ENCODE measurements at regions of chr1 and their contacts with region 1.

Region 1: GRCh38 chr1:109539676-109540075 is at the start of gene GPR61:
- DNase-seq: no peak
- ATAC-seq: no peak
- H3K4me3 ChIP-seq: no peak within 1 kb of the TSS
- H3K27ac ChIP-seq: no peak within 1 kb of the TSS
- H3K4me1 ChIP-seq: no peaks in the 10 kb centered on the region
- H3K27me3 ChIP-seq: no peaks in the 10 kb centered on the region
- CTCF ChIP-seq: no peak
- total RNA-seq, gene GPR61: 0.09 TPM in 1 of 6 donors, not detected in the others

Region 2: DNA sequence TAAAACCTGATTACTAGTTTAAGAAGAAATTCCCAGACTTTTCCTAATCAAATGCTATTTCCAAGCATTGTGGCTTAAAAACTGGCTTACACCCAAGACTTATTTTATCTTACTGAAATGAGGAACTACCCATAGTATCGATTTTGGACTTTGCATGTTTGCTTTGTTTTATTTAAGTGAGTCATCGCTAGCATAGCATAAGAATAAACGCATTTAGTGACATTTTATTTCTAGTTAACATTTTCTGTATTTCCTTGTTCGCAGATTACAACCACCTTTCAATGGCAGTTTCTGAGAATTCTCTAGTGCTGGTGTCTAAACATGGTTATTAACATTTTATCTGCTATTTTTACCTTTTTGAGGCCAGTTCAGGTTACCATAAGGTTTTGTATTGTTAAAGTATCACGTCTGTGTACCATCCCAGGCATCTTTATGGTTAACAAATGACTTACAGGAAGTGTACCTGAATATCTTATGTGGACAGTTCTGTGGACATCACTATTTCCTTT is 955.3 kb before region 1 on chr1:
- intact Hi-C with region 1: no loop called
- DNase-seq: no peak
- ATAC-seq: peak; percentile 87 to 95 (median 92)
- H3K4me3 ChIP-seq: no peak overlapping the region
- H3K27ac ChIP-seq: peak overlapping the region in 3 of 4 donors; percentile 35 to 87 (median 80)
- H3K4me1 ChIP-seq: peaks cover 10 to 22% (median 22%) of the 10 kb centered on the region in 3 donors
- H3K27me3 ChIP-seq: no peaks in the 10 kb centered on the region
- CTCF ChIP-seq: no peak

Region 3: DNA sequence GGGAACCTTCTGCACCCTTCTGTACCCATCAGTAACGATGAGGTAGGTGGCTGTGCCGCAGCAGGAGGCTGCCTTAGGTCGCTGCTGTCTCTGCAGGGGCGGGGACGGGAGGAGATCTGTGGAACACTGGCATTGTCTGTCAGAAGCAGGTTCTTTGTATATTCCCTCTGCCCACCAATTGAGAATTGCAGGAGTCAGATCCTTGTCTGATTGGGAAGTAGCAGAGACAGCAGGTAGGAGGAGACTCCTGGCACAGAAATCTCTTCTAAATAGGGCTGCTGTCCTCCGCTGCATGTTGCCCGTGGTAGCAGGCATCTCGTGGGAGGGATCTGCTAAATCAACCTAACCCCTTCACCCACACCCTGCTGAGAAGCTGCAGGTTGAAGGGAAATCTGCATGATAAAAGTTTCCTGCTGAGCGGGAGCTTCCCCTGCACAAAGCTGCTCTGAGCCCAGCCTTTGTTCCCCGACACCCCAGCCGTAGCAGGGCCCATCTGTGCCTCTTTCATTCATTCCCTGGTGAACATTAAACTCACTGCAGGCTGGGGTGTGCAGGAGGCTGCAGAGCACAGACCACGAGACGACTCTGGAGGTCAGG is 310.0 kb before region 1 on chr1:
- intact Hi-C with region 1: no loop called
- DNase-seq: no peak
- ATAC-seq: no peak
- H3K4me3 ChIP-seq: no peak overlapping the region
- H3K27ac ChIP-seq: no peak overlapping the region
- H3K4me1 ChIP-seq: no peaks in the 10 kb centered on the region
- H3K27me3 ChIP-seq: no peaks in the 10 kb centered on the region
- CTCF ChIP-seq: no peak

Region 4: DNA sequence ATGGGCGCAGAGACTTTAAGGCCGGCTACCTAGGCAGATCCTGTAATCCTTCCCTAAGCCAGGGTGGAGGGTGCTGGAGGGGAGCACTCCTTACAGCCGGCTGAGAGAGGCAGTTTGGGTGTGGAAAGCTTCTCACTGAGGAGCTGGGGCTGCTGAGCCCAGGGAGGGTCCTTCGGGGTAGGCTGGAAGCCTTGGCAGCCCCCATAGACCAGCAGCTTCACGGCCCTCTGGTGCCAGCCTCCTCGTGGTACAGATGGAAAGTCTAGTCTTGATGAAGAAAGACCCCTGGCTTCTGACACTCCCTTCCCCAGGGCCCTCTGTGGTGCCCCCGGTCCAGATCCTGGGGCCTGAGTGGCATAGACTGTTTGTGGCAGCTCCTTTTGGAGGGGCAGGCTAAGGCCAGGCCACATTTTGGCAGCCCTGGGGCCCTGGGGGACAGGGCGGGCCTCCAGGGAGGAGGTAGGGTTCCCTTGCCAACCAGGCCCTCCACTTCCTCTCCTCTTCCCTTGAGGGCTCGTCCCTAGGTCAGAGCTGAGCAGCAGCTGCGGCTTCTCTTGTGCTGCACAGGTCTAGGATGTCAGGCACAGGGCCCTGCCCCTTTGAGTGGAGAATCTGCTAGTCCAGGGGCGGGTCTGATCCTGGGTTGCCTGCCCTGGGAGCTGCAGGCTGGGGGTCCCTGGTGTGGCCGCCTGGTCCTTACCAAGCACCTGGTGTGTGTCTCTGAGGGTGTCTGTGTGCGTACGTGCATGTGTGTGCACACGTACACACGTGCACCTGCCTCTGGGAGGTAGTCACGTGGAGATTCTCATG is 84.7 kb after region 1 on chr1:
- intact Hi-C with region 1: loop called in 2 of 3 experiments (anchors 5 kb)
- DNase-seq: peak in 1 of 6 donors; percentile 9
- ATAC-seq: no peak
- H3K4me3 ChIP-seq: no peak overlapping the region
- H3K27ac ChIP-seq: no peak overlapping the region
- H3K4me1 ChIP-seq: peaks cover under 1 to 6% (median under 1%) of the 10 kb centered on the region in 3 donors
- H3K27me3 ChIP-seq: no peaks in the 10 kb centered on the region
- CTCF ChIP-seq: no peak

Region 5: DNA sequence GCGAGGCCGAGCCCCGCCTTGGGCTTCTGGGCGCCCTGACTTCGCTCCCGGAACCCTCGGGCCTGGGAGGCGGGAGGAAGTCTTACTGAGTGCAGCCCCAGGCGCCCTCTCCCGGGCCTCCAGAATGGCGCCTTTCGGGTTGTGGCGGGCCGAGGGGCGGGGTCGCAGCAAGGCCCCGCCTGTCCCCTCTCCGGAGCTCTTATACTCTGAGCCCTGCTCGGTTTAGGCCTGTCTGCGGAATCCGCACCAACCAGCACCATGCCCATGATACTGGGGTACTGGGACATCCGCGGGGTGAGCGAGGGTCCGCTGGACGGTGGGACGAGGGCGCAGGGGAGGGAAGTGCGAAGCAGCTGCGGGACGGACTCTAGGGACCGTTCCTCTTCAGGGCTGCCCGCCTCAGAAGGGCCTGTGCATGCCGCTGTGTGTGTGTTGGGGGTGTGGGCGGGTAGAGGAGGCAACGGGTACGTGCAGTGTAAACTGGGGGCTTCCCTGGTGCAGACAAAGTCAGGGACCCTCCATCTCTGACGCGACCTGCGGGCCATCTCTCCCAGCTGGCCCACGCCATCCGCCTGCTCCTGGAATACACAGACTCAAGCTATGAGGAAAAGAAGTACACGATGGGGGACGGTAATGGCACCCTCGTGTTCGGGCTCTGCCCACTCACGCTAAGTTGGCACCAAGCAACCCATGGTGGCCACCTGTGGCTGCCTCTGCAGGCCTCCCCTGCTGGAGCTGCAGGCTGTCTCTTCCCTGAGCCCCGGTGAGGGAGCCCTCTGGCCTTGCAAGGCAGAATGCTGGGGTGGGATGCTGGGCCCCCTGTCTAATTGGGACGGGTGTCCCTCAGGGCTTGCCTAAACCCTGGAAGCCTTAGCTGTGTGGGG is 148.2 kb after region 1 on chr1 and contains the start of gene GSTM1:
- intact Hi-C with region 1: no loop called
- DNase-seq: peak in 3 of 6 donors; percentile 79 to 92 (median 91)
- ATAC-seq: peak in 2 of 4 donors; percentile 98 to 99
- H3K4me3 ChIP-seq: peak within 1 kb of the TSS in 2 of 4 donors; percentile 12 to 54
- H3K27ac ChIP-seq: peak within 1 kb of the TSS in 1 of 4 donors; percentile 87
- H3K4me1 ChIP-seq: no peaks in the 10 kb centered on the region
- H3K27me3 ChIP-seq: no peaks in the 10 kb centered on the region
- CTCF ChIP-seq: no peak
- total RNA-seq, gene GSTM1: 23.3 to 32.1 (median 26.9) TPM in 3 of 6 donors, not detected in the others